CD8-positive, alpha-beta T cell (primary cell): ENCODE measurements at regions of chr13 and their contacts with region 1.

Region 1: DNA sequence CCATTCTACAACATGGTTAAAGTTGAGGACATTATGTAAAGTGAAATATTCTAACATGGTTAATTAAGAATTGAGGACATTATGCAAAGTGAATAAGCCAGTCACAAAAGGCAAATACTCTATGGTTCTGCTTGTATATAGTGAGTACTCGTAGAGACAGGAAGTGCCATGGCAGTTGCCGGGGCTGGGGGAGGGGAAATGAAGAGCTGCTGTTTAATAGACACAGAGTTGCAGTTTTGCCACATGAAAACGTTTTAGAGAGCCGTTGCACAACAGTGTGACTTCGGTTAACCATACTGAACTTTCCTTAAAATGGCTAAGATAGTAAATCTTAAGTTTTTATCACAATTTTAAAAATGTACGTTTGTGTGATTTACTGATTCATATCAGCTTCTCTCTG is 176.9 kb downstream of the SHISA2 start:
- DNase-seq: peak; percentile 35 to 82 (median 66)
- ATAC-seq: peak; percentile 91
- H3K4me3 ChIP-seq: peak overlapping the region in 1 of 2 experiments; percentile 3
- H3K4me3 Mint-ChIP-seq: peak overlapping the region; percentile 30
- H3K27ac ChIP-seq: peak overlapping the region; percentile 15 to 60
- H3K27ac Mint-ChIP-seq: peak overlapping the region; percentile 83
- H3K4me1 ChIP-seq: peaks cover 53% of the 10 kb centered on the region
- H3K4me1 Mint-ChIP-seq: peaks cover 81% of the 10 kb centered on the region
- H3K27me3 ChIP-seq: no peaks in the 10 kb centered on the region
- H3K27me3 Mint-ChIP-seq: no peaks in the 10 kb centered on the region
- CTCF ChIP-seq: no peak

Region 2: GRCh38 chr13:25887962-25888655 is 13.2 kb after region 1 on chr13:
- CTCF ChIA-PET with region 1: no interaction called
- POLR2A ChIA-PET with region 1: interaction called, 4 read pairs
- intact Hi-C with region 1: loop called in 1 of 2 experiments (anchors 1 kb)
- DNase-seq: peak in 2 of 9 experiments; percentile 41 to 71
- ATAC-seq: peak; percentile 84
- H3K4me3 ChIP-seq: no peak overlapping the region
- H3K4me3 Mint-ChIP-seq: no peak overlapping the region
- H3K27ac ChIP-seq: no peak overlapping the region
- H3K27ac Mint-ChIP-seq: no peak overlapping the region
- H3K4me1 ChIP-seq: peaks cover 17% of the 10 kb centered on the region
- H3K4me1 Mint-ChIP-seq: peaks cover 32% of the 10 kb centered on the region
- H3K27me3 ChIP-seq: no peaks in the 10 kb centered on the region
- H3K27me3 Mint-ChIP-seq: no peaks in the 10 kb centered on the region
- CTCF ChIP-seq: no peak